ENCODE measurements at regions of chr5 and their contacts with region 1.

Region 1: DNA sequence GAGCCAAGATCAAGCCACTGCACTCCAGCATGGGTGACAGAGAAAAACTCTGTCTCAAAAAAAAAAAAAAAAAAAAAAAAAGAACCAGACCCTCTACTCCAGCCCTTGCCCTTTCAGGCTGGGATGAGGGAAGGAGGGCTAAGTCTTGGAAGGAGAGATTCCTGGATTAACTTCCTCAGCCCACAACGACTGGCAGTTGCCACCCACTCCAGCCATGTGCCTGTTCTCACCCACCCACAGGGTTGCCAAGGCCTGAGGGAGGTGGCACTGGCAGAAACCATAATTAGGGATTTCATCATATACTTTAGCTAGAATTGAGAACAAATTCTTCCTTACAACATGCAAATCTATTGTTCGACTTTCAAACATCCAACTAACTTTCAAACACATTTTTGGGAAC is 87.8 kb upstream of the SLC30A5 start:
- DNase-seq: no peak
- ATAC-seq: no peak
- H3K4me3 ChIP-seq: no peak overlapping the region
- H3K4me3 Mint-ChIP-seq: no peak overlapping the region
- H3K27ac ChIP-seq: no peak overlapping the region
- H3K27ac Mint-ChIP-seq: no peak overlapping the region
- H3K4me1 ChIP-seq: no peaks in the 10 kb centered on the region
- H3K4me1 Mint-ChIP-seq: no peaks in the 10 kb centered on the region
- H3K27me3 ChIP-seq: no peaks in the 10 kb centered on the region
- H3K27me3 Mint-ChIP-seq: peaks cover 20 to 27% of the 10 kb centered on the region in 2 donors

Region 2: DNA sequence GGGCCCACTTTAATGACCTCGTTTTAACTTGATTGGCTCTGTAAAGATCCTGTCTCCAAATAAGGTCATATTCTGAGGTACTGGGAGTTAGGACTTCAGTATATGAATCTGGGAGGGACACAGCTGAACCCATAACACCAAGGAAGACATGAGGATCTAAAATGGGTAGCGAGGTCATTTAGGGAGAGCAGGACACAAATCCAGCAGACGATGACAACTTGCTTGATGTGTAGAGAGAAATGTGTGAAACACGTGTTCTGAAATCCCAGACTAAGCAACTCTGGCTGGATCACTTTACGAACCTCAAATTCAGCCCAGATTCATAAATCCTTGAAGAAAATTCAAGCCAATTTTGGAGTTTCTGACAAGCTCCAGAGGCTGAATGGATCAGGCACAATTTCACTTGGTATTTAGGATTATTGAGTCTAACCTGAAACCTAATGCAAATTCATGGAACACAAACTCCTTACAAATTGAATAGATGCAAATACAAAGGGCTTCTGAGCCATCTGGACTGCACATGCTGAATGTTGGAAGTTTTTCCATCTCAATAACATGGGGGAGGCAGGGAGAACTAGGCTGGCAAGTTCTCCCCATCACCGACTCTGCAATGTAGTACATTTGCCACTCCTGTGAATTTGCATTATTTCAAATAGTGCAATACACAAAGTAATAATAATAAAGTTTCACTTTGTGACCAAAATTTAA is 13.8 kb after region 1 on chr5:
- CTCF ChIA-PET with region 1: interaction called, 3 to 11 read pairs
- POLR2A ChIA-PET with region 1: no interaction called
- DNase-seq: no peak
- ATAC-seq: no peak
- H3K4me3 ChIP-seq: no peak overlapping the region
- H3K4me3 Mint-ChIP-seq: no peak overlapping the region
- H3K27ac ChIP-seq: no peak overlapping the region
- H3K27ac Mint-ChIP-seq: no peak overlapping the region
- H3K4me1 ChIP-seq: peaks cover 0 to 2% of the 10 kb centered on the region in 2 experiments
- H3K4me1 Mint-ChIP-seq: peaks cover 0 to 6% (median 0%) of the 10 kb centered on the region in 3 donors
- H3K27me3 ChIP-seq: peaks cover 0 to 5% of the 10 kb centered on the region in 2 experiments
- H3K27me3 Mint-ChIP-seq: peaks cover 5 to 20% of the 10 kb centered on the region in 2 donors

Region 3: DNA sequence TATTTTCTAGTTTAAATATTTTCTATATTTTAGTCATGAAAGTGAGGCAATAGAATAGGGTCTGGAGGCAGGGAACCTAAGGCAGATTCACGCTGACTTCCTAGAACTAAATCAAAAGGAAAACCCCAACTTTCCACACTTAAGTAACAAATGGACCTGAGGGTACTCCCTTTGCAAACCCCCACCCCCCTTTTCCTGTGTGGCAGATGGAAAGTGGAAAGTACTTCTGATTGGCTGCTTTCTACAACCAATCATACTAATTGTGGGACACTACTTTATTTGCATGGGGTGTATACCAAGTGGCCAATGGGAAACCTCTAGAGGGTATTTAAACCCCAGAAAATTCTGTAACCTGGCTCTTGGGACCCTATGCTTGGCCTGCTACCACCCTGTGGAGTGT is 178.6 kb after region 1 on chr5:
- CTCF ChIA-PET with region 1: no interaction called
- POLR2A ChIA-PET with region 1: no interaction called
- DNase-seq: no peak
- ATAC-seq: no peak
- H3K4me3 ChIP-seq: no peak overlapping the region
- H3K4me3 Mint-ChIP-seq: no peak overlapping the region
- H3K27ac ChIP-seq: no peak overlapping the region
- H3K27ac Mint-ChIP-seq: no peak overlapping the region
- H3K4me1 ChIP-seq: peaks cover 0 to 9% of the 10 kb centered on the region in 2 experiments
- H3K4me1 Mint-ChIP-seq: peaks cover 6 to 7% (median 7%) of the 10 kb centered on the region in 3 donors
- H3K27me3 ChIP-seq: no peaks in the 10 kb centered on the region
- H3K27me3 Mint-ChIP-seq: no peaks in the 10 kb centered on the region